CD8-positive, alpha-beta T cell (primary cell): ENCODE measurements at regions of chr14 and their contacts with region 1.

Region 1: DNA sequence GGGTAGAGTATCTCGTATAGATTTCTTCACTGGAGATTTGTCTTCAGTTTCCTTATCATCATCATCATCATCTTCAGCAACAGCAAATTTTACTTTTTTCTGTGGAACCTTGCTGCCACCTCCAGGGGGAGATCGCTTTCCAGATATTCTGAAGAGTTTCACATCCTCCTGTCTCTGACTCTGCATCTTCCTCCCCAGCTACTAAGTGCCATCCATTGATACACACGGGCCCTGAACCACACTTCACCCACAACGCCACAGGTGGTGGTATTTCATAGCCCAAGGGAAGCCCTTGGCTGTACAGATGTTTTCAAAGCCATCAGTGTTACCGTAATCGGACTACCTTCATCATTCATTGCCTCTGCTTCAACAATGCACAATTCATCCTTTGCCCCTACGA is 82.2 kb downstream of the PPP2R5C start:
- DNase-seq: peak in 8 of 9 experiments; percentile 24 to 89 (median 62)
- ATAC-seq: peak; percentile 70
- H3K4me3 ChIP-seq: no peak overlapping the region
- H3K4me3 Mint-ChIP-seq: peak overlapping the region; percentile 52
- H3K27ac ChIP-seq: peak overlapping the region in 1 of 2 experiments; percentile 21
- H3K27ac Mint-ChIP-seq: peak overlapping the region; percentile 90
- H3K4me1 ChIP-seq: peaks cover 67% of the 10 kb centered on the region
- H3K4me1 Mint-ChIP-seq: peaks cover 89% of the 10 kb centered on the region
- H3K27me3 ChIP-seq: no peaks in the 10 kb centered on the region
- H3K27me3 Mint-ChIP-seq: no peaks in the 10 kb centered on the region
- CTCF ChIP-seq: peak; percentile 72

Region 2: GRCh38 chr14:101876555-101876938 is 32.9 kb after region 1 on chr14:
- CTCF ChIA-PET with region 1: interaction called, 5 read pairs
- POLR2A ChIA-PET with region 1: no interaction called
- intact Hi-C with region 1: loop called (anchors 5 kb)
- DNase-seq: peak; percentile 38 to 93 (median 65)
- ATAC-seq: peak; percentile 85
- H3K4me3 ChIP-seq: peak overlapping the region; percentile 13 to 23
- H3K4me3 Mint-ChIP-seq: peak overlapping the region; percentile 78
- H3K27ac ChIP-seq: peak overlapping the region; percentile 45 to 86
- H3K27ac Mint-ChIP-seq: peak overlapping the region; percentile 97
- H3K4me1 ChIP-seq: peaks cover 58% of the 10 kb centered on the region
- H3K4me1 Mint-ChIP-seq: peaks cover 81% of the 10 kb centered on the region
- H3K27me3 ChIP-seq: no peaks in the 10 kb centered on the region
- H3K27me3 Mint-ChIP-seq: no peaks in the 10 kb centered on the region
- CTCF ChIP-seq: no peak